CD14-positive monocyte (primary cell): ENCODE measurements at regions of chr2 and their contacts with region 1.

Region 1: DNA sequence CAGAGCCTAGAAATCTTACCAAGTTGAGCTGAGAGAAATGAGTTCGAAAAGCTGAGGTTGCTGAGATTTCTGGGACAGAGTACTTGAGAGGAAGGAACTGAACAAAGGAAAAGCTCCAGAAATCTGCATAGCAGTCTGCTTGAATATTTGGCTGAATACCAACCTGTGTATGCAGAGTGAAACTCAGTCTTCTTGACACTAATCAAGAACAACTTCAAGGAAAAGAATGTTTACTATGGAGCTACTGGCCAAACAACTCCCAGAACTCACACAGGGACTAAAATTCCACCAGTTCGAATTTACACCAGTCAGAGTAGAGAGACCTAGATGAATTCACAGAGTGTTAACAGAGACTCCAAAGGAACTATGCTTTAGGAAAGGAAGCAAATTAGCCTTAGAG is 66.5 kb downstream of the USP37 start:
- DNase-seq: no peak
- H3K4me3 ChIP-seq: no peak overlapping the region
- H3K4me3 Mint-ChIP-seq: no peak overlapping the region
- H3K27ac ChIP-seq: peak overlapping the region in 1 of 2 donors; percentile 34
- H3K27ac Mint-ChIP-seq: no peak overlapping the region
- H3K4me1 ChIP-seq: no peaks in the 10 kb centered on the region
- H3K4me1 Mint-ChIP-seq: peaks cover 2% of the 10 kb centered on the region
- H3K27me3 ChIP-seq: no peaks in the 10 kb centered on the region
- H3K27me3 Mint-ChIP-seq: peaks cover 0 to 1% (median 0%) of the 10 kb centered on the region in 3 donors
- CTCF ChIP-seq: no peak

Region 2: DNA sequence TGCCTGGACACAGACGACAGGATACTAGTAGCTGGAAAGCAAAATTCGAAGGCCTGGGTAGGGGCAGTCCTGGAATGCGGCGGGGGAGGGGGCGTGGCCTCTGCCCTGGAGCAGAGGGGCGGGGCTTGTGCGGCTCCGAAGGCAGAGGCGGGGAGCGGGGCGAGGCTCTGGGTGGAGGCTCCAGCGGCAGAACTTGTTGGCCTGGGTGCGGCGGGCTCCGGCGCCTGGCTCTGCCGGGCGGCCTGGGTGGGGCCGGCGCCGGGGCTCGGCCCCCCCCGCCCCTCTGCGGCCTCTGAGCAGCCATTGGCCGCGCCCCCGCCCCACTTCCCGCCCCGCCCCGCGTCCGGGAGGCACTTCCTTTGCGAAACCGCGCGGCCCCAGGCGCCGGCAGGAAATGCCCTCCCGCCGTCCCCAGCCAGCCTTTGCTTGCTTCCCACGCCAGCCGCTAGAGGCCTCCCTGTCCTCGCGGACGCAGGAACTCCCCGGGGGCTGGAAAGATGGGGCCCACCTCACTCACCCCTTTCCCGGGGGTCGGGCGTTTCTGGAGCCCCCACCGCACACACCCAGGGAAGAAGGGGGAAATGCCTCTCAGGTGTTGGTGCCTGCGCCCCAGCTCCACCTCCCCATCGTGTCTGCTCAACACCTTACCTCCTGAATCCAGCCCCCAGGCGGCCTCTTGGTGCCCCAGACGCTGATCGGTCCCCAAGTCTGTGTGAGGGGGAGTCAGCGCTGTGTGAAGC is 95.3 kb before region 1 on chr2:
- intact Hi-C with region 1: no loop called
- DNase-seq: peak; percentile 90 to 94 (median 92)
- H3K4me3 ChIP-seq: peak overlapping the region; percentile 33 to 80 (median 34)
- H3K4me3 Mint-ChIP-seq: peak overlapping the region; percentile 70 to 90
- H3K27ac ChIP-seq: peak overlapping the region; percentile 72 to 87
- H3K27ac Mint-ChIP-seq: peak overlapping the region; percentile 90 to 98 (median 93)
- H3K4me1 ChIP-seq: peaks cover 68% of the 10 kb centered on the region in 2 donors
- H3K4me1 Mint-ChIP-seq: peaks cover 66% of the 10 kb centered on the region
- H3K27me3 ChIP-seq: no peaks in the 10 kb centered on the region
- H3K27me3 Mint-ChIP-seq: no peaks in the 10 kb centered on the region
- CTCF ChIP-seq: peak; percentile 75

Region 3: DNA sequence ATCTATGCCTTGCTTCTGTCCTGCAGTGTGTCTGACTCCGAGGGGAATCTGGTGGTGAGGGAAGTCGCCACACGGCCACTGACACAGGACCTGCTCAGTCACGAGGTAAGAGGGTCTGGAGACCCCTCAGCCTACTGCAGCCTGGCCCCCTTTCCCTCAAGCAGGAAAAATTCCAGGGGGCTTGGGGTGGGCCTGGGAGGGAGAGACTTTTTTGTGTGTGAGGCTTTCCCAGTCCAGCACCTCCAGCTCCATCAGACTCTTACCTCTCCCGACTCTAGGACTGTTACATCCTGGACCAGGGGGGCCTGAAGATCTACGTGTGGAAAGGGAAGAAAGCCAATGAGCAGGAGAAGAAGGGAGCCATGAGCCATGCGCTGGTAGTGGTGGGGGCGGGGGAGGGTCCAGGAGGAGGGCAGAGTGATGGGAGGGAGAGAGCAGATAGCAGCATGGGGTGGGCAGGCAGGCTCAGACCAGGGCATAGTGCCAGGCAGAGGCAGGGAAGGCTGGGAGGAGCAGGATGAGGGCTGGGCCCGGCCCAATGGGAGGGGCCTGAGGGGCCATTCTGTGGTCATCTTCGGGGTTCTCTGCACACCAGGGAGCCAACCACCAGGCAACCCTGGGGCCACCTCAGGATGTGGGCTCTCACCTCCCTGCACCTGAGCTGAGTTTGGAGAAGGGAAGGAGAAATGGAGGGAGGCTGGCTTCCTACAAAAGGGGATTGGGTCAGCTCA is 71.9 kb before region 1 on chr2:
- intact Hi-C with region 1: loop called in 1 of 2 experiments (anchors 10 kb)
- DNase-seq: no peak
- H3K4me3 ChIP-seq: no peak overlapping the region
- H3K4me3 Mint-ChIP-seq: no peak overlapping the region
- H3K27ac ChIP-seq: no peak overlapping the region
- H3K27ac Mint-ChIP-seq: no peak overlapping the region
- H3K4me1 ChIP-seq: no peaks in the 10 kb centered on the region
- H3K4me1 Mint-ChIP-seq: no peaks in the 10 kb centered on the region
- H3K27me3 ChIP-seq: no peaks in the 10 kb centered on the region
- H3K27me3 Mint-ChIP-seq: peaks cover 3 to 6% (median 4%) of the 10 kb centered on the region in 3 donors
- CTCF ChIP-seq: no peak